B cell (primary cell): ENCODE measurements at regions of chr10 and their contacts with region 1.

Region 1: DNA sequence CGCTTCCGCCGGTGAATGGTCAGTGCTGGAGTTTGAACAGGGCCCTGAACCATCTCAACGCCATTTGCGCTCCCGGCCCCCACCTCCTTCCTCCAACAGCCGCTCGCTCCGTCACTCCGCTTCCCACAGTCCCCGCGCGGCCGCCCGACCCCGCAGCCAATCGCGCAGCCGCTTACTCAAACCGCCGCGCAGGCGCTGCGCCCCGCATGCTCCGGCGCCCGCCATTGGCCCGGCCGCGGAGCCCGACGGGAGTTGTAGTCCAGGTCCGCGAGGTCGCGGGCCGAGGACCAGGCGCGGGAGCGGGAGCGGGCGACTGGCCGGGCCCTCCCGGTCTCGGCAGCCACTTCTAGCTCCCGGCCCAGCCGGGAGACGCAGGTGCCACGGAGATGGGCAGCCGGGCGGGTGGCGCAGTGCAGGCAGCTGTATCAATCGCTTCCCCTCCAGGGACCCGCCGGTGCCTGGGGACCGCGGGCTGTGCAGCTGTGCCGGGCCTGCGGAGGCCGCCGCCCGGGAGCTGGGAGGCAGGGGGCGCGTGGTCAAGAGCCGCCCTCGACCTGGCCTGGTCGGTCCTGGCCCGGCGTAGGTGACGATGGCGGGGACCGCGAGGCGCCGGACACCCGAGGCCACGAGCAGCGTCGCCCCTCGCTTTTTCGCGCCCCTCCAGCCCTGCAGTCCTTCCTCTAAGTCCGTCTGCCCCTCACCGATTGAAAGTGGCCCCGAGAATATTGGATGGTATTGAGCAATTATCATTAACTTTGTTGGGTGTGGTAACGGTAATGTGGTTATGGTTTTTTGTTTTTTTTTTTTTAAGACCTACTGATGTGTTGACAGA is at the start of gene WAPL:
- DNase-seq: peak; percentile 96
- ATAC-seq: peak; percentile 91
- H3K4me3 ChIP-seq: peak within 1 kb of the TSS; percentile 60 to 89 (median 80)
- H3K4me3 Mint-ChIP-seq: peak within 1 kb of the TSS; percentile 91
- H3K27ac ChIP-seq: peak within 1 kb of the TSS; percentile 42 to 85
- H3K27ac Mint-ChIP-seq: peak within 1 kb of the TSS; percentile 92
- H3K4me1 ChIP-seq: peaks cover 23 to 32% of the 10 kb centered on the region in 2 donors
- H3K4me1 Mint-ChIP-seq: peaks cover 35% of the 10 kb centered on the region
- H3K27me3 ChIP-seq: peaks cover 0 to 1% (median 0%) of the 10 kb centered on the region in 4 experiments
- H3K27me3 Mint-ChIP-seq: peaks cover 5% of the 10 kb centered on the region
- CTCF ChIP-seq: no peak
- total RNA-seq, gene WAPL: 42.8 and 42.9 TPM in 2 replicates

Region 2: DNA sequence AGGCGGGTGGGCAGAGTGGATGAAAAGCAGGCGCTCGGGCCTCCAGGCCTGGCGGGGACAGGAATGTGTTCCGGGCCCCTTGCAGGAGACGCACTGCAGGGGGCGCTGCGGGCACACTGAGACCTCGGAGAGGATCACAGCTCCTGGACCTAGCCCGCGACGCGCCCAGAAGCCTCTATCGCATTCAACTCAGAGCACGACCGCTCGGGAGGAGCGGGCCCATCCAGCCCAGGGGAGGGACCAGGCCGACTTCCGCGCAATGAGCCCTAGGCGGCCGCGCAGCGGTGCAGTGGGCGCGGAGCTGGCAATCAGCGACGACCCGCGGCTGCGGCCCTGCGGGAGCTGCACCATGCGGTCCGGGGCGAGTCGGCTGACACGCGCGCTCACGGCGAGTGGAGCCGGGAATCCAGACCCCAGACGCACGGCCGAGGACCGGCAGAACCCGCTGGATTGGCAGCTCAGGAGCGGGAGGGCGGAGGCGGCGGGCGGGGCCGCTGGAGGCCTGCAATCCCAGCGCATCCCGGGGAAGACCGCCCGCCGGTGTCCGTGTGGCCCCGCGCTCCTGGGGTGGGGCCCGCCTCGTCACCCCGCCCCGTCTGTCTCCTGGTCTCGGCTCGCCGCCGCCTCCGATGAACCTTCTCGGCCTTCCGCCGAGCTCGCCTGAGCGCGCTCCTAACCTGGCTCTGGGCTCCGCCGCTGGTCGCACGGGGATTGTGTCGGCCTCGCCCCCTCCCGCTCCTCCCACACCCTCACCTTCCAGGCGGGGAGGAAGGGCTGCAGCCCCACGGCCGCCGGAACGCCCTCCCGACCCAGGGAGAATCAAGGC is 121.8 kb before region 1 on chr10:
- CTCF ChIA-PET with region 1: interaction called, 9 read pairs
- POLR2A ChIA-PET with region 1: interaction called, 3 read pairs
- intact Hi-C with region 1: loop called (anchors 1 kb)
- DNase-seq: peak; percentile 92
- ATAC-seq: peak; percentile 88
- H3K4me3 ChIP-seq: peak overlapping the region in 4 of 5 experiments; percentile 61 to 77 (median 63)
- H3K4me3 Mint-ChIP-seq: peak overlapping the region; percentile 93
- H3K27ac ChIP-seq: peak overlapping the region; percentile 15 to 61
- H3K27ac Mint-ChIP-seq: peak overlapping the region; percentile 61
- H3K4me1 ChIP-seq: peaks cover 13 to 20% of the 10 kb centered on the region in 2 donors
- H3K4me1 Mint-ChIP-seq: peaks cover 15% of the 10 kb centered on the region
- H3K27me3 ChIP-seq: peaks cover 0 to 7% (median 4%) of the 10 kb centered on the region in 4 experiments
- H3K27me3 Mint-ChIP-seq: peaks cover 16% of the 10 kb centered on the region
- CTCF ChIP-seq: peak; percentile 98

Region 3: GRCh38 chr10:86451604-86451960 is 70.3 kb before region 1 on chr10:
- CTCF ChIA-PET with region 1: no interaction called
- POLR2A ChIA-PET with region 1: no interaction called
- intact Hi-C with region 1: loop called (anchors 5 kb)
- DNase-seq: no peak
- ATAC-seq: no peak
- H3K4me3 ChIP-seq: no peak overlapping the region
- H3K4me3 Mint-ChIP-seq: no peak overlapping the region
- H3K27ac ChIP-seq: peak overlapping the region in 1 of 2 donors; percentile 7
- H3K27ac Mint-ChIP-seq: no peak overlapping the region
- H3K4me1 ChIP-seq: peaks cover 25 to 28% of the 10 kb centered on the region in 2 donors
- H3K4me1 Mint-ChIP-seq: peaks cover 38% of the 10 kb centered on the region
- H3K27me3 ChIP-seq: no peaks in the 10 kb centered on the region
- H3K27me3 Mint-ChIP-seq: no peaks in the 10 kb centered on the region
- CTCF ChIP-seq: no peak

Region 4: GRCh38 chr10:86585037-86585725 is 63.3 kb after region 1 on chr10:
- CTCF ChIA-PET with region 1: interaction called, 9 read pairs
- POLR2A ChIA-PET with region 1: no interaction called
- intact Hi-C with region 1: loop called (anchors 5 kb)
- DNase-seq: peak; percentile 81
- ATAC-seq: peak; percentile 97
- H3K4me3 ChIP-seq: no peak overlapping the region
- H3K4me3 Mint-ChIP-seq: no peak overlapping the region
- H3K27ac ChIP-seq: no peak overlapping the region
- H3K27ac Mint-ChIP-seq: no peak overlapping the region
- H3K4me1 ChIP-seq: peaks cover 3 to 5% of the 10 kb centered on the region in 2 donors
- H3K4me1 Mint-ChIP-seq: peaks cover 2% of the 10 kb centered on the region
- H3K27me3 ChIP-seq: peaks cover 0 to 12% (median 0%) of the 10 kb centered on the region in 4 experiments
- H3K27me3 Mint-ChIP-seq: peaks cover 15% of the 10 kb centered on the region
- CTCF ChIP-seq: peak; percentile 97

Region 5: GRCh38 chr10:86755740-86756510 is 234.0 kb after region 1 on chr10:
- CTCF ChIA-PET with region 1: no interaction called
- POLR2A ChIA-PET with region 1: no interaction called
- intact Hi-C with region 1: loop called (anchors 2 kb)
- DNase-seq: peak; percentile 86
- ATAC-seq: peak; percentile 91
- H3K4me3 ChIP-seq: peak overlapping the region; percentile 28 to 81 (median 71)
- H3K4me3 Mint-ChIP-seq: peak overlapping the region; percentile 90
- H3K27ac ChIP-seq: no peak overlapping the region
- H3K27ac Mint-ChIP-seq: peak overlapping the region; percentile 67
- H3K4me1 ChIP-seq: peaks cover 37 to 39% of the 10 kb centered on the region in 2 donors
- H3K4me1 Mint-ChIP-seq: peaks cover 44% of the 10 kb centered on the region
- H3K27me3 ChIP-seq: peaks cover 3 to 29% (median 23%) of the 10 kb centered on the region in 4 experiments
- H3K27me3 Mint-ChIP-seq: peaks cover 26% of the 10 kb centered on the region
- CTCF ChIP-seq: no peak